ENCODE measurements at regions of chr11 and their contacts with region 1.

Region 1: GRCh38 chr11:18492888-18493287 is 33.9 kb downstream of the TSG101 start:
- DNase-seq: peak in 1 of 2 experiments; percentile 52
- H3K4me3 ChIP-seq: no peak overlapping the region
- H3K27ac ChIP-seq: peak overlapping the region; percentile 19
- H3K4me1 ChIP-seq: peaks cover 54% of the 10 kb centered on the region
- H3K27me3 ChIP-seq: no peaks in the 10 kb centered on the region
- CTCF ChIP-seq: no peak

Region 2: GRCh38 chr11:18347471-18348125 is 145.3 kb before region 1 on chr11:
- CTCF ChIA-PET with region 1: interaction called, 20 read pairs
- POLR2A ChIA-PET with region 1: no interaction called
- intact Hi-C with region 1: no loop called
- DNase-seq: no peak
- H3K4me3 ChIP-seq: no peak overlapping the region
- H3K27ac ChIP-seq: no peak overlapping the region
- H3K4me1 ChIP-seq: no peaks in the 10 kb centered on the region
- H3K27me3 ChIP-seq: no peaks in the 10 kb centered on the region
- CTCF ChIP-seq: no peak

Region 3: GRCh38 chr11:18408558-18409242 is 84.2 kb before region 1 on chr11:
- CTCF ChIA-PET with region 1: interaction called, 6 read pairs
- POLR2A ChIA-PET with region 1: no interaction called
- intact Hi-C with region 1: loop called (anchors 5 kb)
- DNase-seq: no peak
- H3K4me3 ChIP-seq: no peak overlapping the region
- H3K27ac ChIP-seq: peak overlapping the region; percentile 63
- H3K4me1 ChIP-seq: peaks cover 21% of the 10 kb centered on the region
- H3K27me3 ChIP-seq: no peaks in the 10 kb centered on the region
- CTCF ChIP-seq: no peak

Measured in PC-9 (cell line).